Activated CD4-positive, alpha-beta memory T cell treated with anti-CD3 and anti-CD28 coated beads for 36 hours (primary cell): ENCODE measurements at regions of chr11 and their contacts with region 1.

Region 1: GRCh38 chr11:13276832-13277767 is 490 bp upstream of the BMAL1 start:
- DNase-seq: peak; percentile 98
- H3K4me3 Mint-ChIP-seq: peak overlapping the region; percentile 95
- H3K27ac Mint-ChIP-seq: peak overlapping the region; percentile 78
- H3K4me1 Mint-ChIP-seq: peaks cover 44% of the 10 kb centered on the region
- H3K27me3 Mint-ChIP-seq: peaks cover 7% of the 10 kb centered on the region

Region 2: DNA sequence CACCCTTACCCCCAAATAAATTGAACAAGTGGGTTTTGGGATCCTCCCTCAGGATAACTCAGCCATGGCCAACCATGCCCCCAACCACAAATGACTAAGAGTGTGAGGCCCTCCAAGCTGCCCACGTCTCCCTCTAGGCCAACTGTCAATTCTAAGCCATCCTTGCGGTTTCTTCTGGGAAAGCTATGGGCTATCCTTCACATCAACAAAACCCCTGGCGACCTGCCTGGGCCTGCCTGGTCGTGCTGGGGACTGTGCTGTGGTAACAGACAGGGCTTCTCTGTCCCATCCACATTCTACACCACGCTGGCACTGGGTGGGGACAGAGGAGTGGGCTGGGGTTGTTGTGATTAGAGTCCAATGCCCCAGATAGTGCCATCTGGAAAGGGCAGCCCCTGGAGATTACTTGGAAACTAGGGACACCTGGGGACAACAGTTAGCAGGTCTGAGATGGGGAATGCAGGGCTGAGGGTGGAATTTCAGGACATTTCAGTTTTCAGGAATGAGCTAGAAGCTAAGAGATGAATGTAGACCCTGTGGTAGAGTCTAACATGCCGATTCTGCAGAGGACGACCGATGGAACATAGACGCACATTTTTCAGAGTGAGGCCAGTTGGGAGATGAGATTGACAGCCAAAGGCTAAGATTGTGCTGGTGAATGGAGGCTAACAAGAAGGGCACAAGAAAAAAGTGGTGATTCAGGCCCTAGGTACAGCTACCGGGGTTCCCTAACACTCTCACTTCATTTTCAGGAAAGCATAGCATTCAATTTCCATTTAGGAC is 136.0 kb before region 1 on chr11:
- CTCF ChIA-PET with region 1: no interaction called
- POLR2A ChIA-PET with region 1: no interaction called
- intact Hi-C with region 1: no loop called
- DNase-seq: no peak
- H3K4me3 Mint-ChIP-seq: no peak overlapping the region
- H3K27ac Mint-ChIP-seq: no peak overlapping the region
- H3K4me1 Mint-ChIP-seq: no peaks in the 10 kb centered on the region
- H3K27me3 Mint-ChIP-seq: peaks cover 11% of the 10 kb centered on the region

Region 3: DNA sequence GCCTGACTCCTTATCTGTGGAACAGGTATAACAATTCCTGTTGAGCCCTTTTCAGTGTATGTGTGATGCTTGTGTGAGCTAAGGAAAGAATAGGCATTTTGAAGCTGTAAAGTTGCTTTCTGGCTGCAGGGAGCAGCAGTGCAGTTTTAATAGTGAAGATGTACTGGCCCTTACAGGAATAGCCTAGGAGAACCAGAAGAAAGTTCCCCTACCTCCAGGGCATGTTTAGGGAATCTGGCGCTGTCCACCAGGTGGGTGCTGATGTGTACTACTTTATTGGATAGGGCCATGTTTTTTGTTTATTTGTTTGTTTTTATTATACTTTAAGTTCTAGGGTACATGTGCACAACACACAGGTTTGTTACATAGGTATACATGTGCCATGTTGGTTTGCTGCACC is 12.0 kb after region 1 on chr11:
- CTCF ChIA-PET with region 1: interaction called, 8 read pairs
- POLR2A ChIA-PET with region 1: interaction called, 13 read pairs
- intact Hi-C with region 1: loop called (anchors 1 kb)
- DNase-seq: no peak
- H3K4me3 Mint-ChIP-seq: no peak overlapping the region
- H3K27ac Mint-ChIP-seq: no peak overlapping the region
- H3K4me1 Mint-ChIP-seq: peaks cover 81% of the 10 kb centered on the region
- H3K27me3 Mint-ChIP-seq: no peaks in the 10 kb centered on the region

Region 4: GRCh38 chr11:13297917-13298356 is 20.8 kb after region 1 on chr11:
- CTCF ChIA-PET with region 1: no interaction called
- POLR2A ChIA-PET with region 1: interaction called, 4 read pairs
- intact Hi-C with region 1: loop called (anchors 2 kb)
- DNase-seq: peak; percentile 70
- H3K4me3 Mint-ChIP-seq: no peak overlapping the region
- H3K27ac Mint-ChIP-seq: peak overlapping the region; percentile 55
- H3K4me1 Mint-ChIP-seq: peaks cover 82% of the 10 kb centered on the region
- H3K27me3 Mint-ChIP-seq: no peaks in the 10 kb centered on the region

Region 5: GRCh38 chr11:13343931-13344717 is 67.0 kb after region 1 on chr11:
- CTCF ChIA-PET with region 1: interaction called, 52 read pairs
- POLR2A ChIA-PET with region 1: interaction called, 9 read pairs
- intact Hi-C with region 1: no loop called
- DNase-seq: peak; percentile 80
- H3K4me3 Mint-ChIP-seq: no peak overlapping the region
- H3K27ac Mint-ChIP-seq: no peak overlapping the region
- H3K4me1 Mint-ChIP-seq: peaks cover 43% of the 10 kb centered on the region
- H3K27me3 Mint-ChIP-seq: no peaks in the 10 kb centered on the region

Region 6: GRCh38 chr11:13462901-13463778 is 186.0 kb after region 1 on chr11 and contains the start of gene BTBD10:
- CTCF ChIA-PET with region 1: no interaction called
- POLR2A ChIA-PET with region 1: no interaction called
- intact Hi-C with region 1: loop called (anchors 1 kb)
- DNase-seq: peak; percentile 95
- H3K4me3 Mint-ChIP-seq: peak within 1 kb of the TSS; percentile 98
- H3K27ac Mint-ChIP-seq: peak within 1 kb of the TSS; percentile 95
- H3K4me1 Mint-ChIP-seq: peaks cover 35% of the 10 kb centered on the region
- H3K27me3 Mint-ChIP-seq: no peaks in the 10 kb centered on the region
- total RNA-seq, gene BTBD10: 22.3 to 24.3 TPM

Region 7: DNA sequence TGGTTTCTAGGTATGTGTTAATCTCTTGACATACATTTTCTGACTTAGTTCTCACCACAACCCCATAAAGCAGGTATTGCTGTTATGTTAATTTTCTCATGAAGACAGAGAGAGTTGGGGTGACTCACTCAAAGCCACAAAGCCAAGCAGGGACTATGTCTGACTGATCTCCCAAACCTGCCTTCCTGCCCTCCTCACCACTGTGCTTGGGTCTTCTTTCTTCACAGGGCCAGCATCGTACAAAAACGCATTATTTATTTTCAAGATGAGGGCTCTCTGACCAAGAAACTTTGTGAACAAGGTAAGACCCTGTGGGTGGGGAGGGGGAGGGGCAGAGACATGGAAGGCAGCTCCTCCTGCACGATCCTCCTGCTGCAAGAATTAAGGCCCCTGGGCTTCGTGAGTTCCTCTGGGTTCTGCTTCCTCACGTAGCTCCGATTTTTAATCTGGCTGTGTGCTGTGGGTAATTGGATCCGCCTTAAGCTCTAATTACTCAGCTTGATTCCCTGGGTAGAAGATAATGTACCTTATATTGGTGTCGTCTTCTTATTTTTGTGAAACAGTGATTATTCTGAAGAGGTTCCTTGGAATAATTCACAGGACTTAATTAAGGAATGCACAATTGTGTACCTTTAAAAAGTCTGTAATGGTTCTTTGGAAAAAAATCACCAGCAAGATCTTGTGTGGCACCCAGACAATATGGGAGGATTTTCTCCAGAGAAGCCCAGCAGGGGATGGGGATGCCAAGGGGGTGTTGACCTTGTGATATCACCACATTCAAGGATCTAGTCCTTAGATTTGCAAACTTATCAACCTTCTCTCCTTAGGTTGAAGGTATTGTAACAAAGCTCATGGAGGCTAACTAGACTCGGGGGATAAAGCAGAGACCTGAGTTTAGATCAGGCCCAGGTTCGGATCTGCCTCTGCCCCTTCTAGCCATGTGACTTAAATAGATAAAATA is 798.3 kb after region 1 on chr11:
- CTCF ChIA-PET with region 1: no interaction called
- POLR2A ChIA-PET with region 1: no interaction called
- intact Hi-C with region 1: no loop called
- DNase-seq: peak; percentile 79
- H3K4me3 Mint-ChIP-seq: peak overlapping the region; percentile 2
- H3K27ac Mint-ChIP-seq: peak overlapping the region; percentile 34
- H3K4me1 Mint-ChIP-seq: peaks cover 46% of the 10 kb centered on the region
- H3K27me3 Mint-ChIP-seq: no peaks in the 10 kb centered on the region